ENCODE measurements at regions of chr20 and their contacts with region 1.

Region 1: DNA sequence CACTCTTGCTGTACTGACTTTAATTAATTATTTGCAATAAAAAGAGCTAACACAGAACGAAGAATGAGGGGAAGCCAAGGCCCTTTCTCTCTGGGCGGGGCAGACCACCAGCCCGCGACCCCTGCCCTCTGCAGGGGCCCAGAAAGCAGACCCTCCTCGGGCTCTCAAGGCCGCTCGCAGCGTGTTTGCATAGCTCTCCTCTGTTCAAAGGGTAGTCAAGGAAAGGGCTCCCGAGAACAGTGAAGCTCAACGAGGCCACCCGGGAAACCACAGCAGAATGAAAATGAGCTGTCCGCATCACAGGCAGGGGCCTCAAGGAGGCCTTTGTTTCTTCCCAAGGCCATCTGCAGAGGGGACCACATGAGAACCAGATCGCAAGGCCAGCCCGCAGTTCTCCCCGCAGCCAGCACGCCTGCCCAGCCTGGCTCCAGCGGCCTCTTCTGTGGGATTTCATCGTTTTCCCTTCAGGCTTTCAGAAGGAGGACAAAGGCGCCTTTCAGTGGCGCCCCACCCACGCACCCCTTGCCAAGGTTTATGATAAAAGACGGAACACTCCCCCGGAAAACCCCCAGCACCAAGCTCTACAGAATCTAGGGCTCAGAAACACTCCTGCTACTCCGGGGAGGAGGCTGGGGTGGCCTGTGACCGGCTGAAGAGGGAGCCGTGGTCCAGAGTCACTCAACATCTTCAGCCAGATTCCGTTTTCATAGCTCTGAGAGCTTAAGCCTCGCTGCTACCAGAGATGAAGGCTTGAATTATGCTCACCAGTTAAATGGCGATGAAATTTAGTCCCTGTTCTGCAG is 25.3 kb downstream of the ACSS1 start:
- DNase-seq: no peak
- H3K4me3 ChIP-seq: no peak overlapping the region
- H3K27ac ChIP-seq: peak overlapping the region in 1 of 2 experiments; percentile 16
- H3K4me1 ChIP-seq: peaks cover 16 to 46% (median 41%) of the 10 kb centered on the region in 4 experiments
- H3K27me3 ChIP-seq: no peaks in the 10 kb centered on the region

Region 2: DNA sequence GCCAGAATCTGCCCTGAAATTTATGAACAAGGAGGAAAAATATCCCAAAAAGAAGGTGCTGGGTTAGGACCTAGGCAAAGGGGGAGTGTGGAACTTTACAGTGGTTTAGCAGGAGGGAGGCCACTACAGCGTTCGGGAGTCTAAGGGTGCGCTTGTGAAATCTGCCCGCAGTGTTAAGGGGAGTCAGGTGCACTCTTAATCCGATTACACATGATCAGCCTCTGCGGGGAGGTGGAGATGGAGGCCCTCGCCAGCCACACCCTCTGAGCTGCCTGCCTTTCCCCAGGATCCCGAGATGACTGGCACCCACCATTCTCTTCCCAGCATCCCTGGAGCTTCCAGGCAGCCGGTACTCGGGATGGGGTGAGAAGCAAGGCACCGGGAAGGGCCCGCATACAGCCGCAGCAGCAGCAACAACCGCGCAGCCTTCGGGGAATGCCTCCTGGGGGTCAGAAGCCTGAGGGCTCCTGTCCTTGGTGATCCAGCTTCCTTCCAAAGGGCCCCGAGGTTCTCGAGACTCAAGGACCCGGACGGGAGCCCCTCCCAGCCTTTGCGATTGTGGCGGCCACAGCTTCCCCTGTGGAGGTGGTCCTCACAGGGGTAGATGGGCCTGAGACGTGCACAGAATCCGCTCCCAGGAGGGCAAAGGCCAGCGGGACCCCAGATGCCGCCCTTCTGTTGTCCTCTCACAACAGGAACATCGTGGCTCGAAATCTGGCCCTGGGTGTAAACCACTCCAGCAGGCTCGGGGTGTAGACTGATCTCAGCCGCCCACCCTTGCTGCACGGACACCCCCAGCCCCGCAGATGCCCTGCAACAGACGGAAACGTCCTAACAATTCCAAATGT is 140.9 kb before region 1 on chr20:
- CTCF ChIA-PET with region 1: no interaction called
- POLR2A ChIA-PET with region 1: no interaction called
- DNase-seq: no peak
- H3K4me3 ChIP-seq: no peak overlapping the region
- H3K27ac ChIP-seq: no peak overlapping the region
- H3K4me1 ChIP-seq: no peaks in the 10 kb centered on the region
- H3K27me3 ChIP-seq: no peaks in the 10 kb centered on the region

Region 3: DNA sequence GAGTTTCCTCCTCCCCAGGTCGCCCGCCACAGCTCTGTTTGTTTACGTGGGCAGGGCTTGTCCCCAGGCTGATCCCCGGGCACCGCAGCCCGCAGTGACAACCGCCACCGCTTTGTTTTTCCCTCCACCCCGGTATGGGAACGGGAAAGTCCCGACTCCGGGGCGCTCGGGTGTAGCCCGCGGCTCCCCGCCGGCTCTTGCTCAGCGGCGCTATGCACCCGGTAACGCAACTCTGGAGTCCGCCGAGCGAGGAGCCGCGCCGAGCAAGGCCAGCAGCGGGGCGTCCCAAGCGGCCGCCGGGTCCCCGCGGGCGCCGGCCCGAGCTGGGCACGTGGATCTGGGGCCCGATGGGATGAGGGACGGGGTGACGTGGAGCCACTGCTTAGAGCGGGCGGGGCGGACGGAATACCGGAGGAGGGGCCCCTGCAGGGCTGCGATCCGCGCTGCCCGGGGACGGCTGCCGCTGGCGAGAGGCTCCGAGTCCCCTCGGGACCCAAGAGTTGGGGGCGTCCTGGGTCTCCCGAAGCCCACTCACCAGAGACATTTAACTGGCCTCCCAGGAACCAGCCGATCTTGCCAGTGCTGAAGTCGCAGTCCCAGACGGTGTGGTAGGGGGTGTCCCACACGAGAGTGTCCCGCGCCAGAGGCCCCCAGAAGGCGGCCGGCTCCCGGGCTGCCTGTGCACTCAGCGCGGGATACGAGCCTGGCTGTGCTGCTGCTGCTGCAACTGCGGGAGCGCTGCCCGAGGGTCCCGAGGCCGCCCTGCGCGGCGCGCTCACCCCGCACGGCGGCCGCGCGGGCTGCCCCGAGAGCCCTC is 24.8 kb after region 1 on chr20:
- CTCF ChIA-PET with region 1: interaction called, 37 read pairs
- POLR2A ChIA-PET with region 1: interaction called, 22 read pairs
- DNase-seq: peak; percentile 69 to 89 (median 88)
- H3K4me3 ChIP-seq: peak overlapping the region; percentile 67 to 87 (median 75)
- H3K27ac ChIP-seq: peak overlapping the region; percentile 64 to 74
- H3K4me1 ChIP-seq: peaks cover 9 to 65% (median 59%) of the 10 kb centered on the region in 4 experiments
- H3K27me3 ChIP-seq: peaks cover 0 to 5% (median 0%) of the 10 kb centered on the region in 5 experiments

Region 4: GRCh38 chr20:25065625-25066338 is 33.1 kb after region 1 on chr20:
- CTCF ChIA-PET with region 1: interaction called, 37 read pairs
- POLR2A ChIA-PET with region 1: no interaction called
- DNase-seq: peak; percentile 73 to 85 (median 80)
- H3K4me3 ChIP-seq: no peak overlapping the region
- H3K27ac ChIP-seq: no peak overlapping the region
- H3K4me1 ChIP-seq: no peaks in the 10 kb centered on the region
- H3K27me3 ChIP-seq: peaks cover 0 to 18% (median 10%) of the 10 kb centered on the region in 5 experiments

Measured in common myeloid progenitor, CD34-positive (primary cell).